PC-9 (cell line): ENCODE measurements at regions of chr14 and their contacts with region 1.

Region 1: DNA sequence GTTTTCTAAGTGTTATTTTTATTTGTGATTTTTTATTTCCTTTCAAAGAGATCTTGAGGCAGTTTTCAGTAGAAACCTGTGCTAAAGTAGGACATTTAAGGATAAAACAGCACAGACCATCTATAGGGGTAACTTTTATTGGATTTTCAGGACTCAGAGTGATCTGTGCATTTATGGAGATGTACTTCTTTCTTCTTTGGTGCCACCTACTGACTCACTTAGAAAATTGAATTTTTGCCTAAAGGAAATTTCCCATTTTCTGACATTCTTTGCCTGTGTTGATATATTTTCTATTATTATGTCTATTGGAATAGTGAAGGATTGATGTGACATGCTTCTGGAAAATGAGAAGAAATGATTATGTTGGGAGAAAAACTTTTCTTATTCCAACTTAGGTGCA is 113.0 kb downstream of the UNC79 start:
- DNase-seq: no peak
- H3K4me3 ChIP-seq: no peak overlapping the region
- H3K27ac ChIP-seq: no peak overlapping the region
- H3K4me1 ChIP-seq: no peaks in the 10 kb centered on the region
- H3K27me3 ChIP-seq: peaks cover 55% of the 10 kb centered on the region
- CTCF ChIP-seq: peak; percentile 60

Region 2: GRCh38 chr14:91911474-91912032 is 1632.2 kb before region 1 on chr14:
- CTCF ChIA-PET with region 1: no interaction called
- POLR2A ChIA-PET with region 1: no interaction called
- intact Hi-C with region 1: no loop called
- DNase-seq: no peak
- H3K4me3 ChIP-seq: no peak overlapping the region
- H3K27ac ChIP-seq: no peak overlapping the region
- H3K4me1 ChIP-seq: no peaks in the 10 kb centered on the region
- H3K27me3 ChIP-seq: no peaks in the 10 kb centered on the region
- CTCF ChIP-seq: peak; percentile 68

Region 3: GRCh38 chr14:93206793-93207467 is 336.8 kb before region 1 on chr14 and contains the starts of genes GON7 and UBR7:
- CTCF ChIA-PET with region 1: no interaction called
- POLR2A ChIA-PET with region 1: no interaction called
- intact Hi-C with region 1: loop called (anchors 5 kb)
- DNase-seq: peak; percentile 92 to 93
- H3K4me3 ChIP-seq: peak within 1 kb of the TSS; percentile 100
- H3K27ac ChIP-seq: peak within 1 kb of the TSS; percentile 63
- H3K4me1 ChIP-seq: peaks cover 23% of the 10 kb centered on the region
- H3K27me3 ChIP-seq: no peaks in the 10 kb centered on the region
- CTCF ChIP-seq: no peak
- total RNA-seq, gene GON7: 6.4 and 9.3 TPM in 2 replicates
- total RNA-seq, gene UBR7: 9.3 and 14.3 TPM in 2 replicates

Region 4: GRCh38 chr14:93231129-93231979 is 312.4 kb before region 1 on chr14:
- CTCF ChIA-PET with region 1: no interaction called
- POLR2A ChIA-PET with region 1: no interaction called
- intact Hi-C with region 1: loop called (anchors 5 kb)
- DNase-seq: no peak
- H3K4me3 ChIP-seq: no peak overlapping the region
- H3K27ac ChIP-seq: no peak overlapping the region
- H3K4me1 ChIP-seq: no peaks in the 10 kb centered on the region
- H3K27me3 ChIP-seq: no peaks in the 10 kb centered on the region
- CTCF ChIP-seq: no peak

Region 5: GRCh38 chr14:93285044-93285443 is 258.7 kb before region 1 on chr14:
- CTCF ChIA-PET with region 1: no interaction called
- POLR2A ChIA-PET with region 1: no interaction called
- intact Hi-C with region 1: loop called (anchors 5 kb)
- DNase-seq: no peak
- H3K4me3 ChIP-seq: no peak overlapping the region
- H3K27ac ChIP-seq: no peak overlapping the region
- H3K4me1 ChIP-seq: no peaks in the 10 kb centered on the region
- H3K27me3 ChIP-seq: no peaks in the 10 kb centered on the region
- CTCF ChIP-seq: no peak

Region 6: DNA sequence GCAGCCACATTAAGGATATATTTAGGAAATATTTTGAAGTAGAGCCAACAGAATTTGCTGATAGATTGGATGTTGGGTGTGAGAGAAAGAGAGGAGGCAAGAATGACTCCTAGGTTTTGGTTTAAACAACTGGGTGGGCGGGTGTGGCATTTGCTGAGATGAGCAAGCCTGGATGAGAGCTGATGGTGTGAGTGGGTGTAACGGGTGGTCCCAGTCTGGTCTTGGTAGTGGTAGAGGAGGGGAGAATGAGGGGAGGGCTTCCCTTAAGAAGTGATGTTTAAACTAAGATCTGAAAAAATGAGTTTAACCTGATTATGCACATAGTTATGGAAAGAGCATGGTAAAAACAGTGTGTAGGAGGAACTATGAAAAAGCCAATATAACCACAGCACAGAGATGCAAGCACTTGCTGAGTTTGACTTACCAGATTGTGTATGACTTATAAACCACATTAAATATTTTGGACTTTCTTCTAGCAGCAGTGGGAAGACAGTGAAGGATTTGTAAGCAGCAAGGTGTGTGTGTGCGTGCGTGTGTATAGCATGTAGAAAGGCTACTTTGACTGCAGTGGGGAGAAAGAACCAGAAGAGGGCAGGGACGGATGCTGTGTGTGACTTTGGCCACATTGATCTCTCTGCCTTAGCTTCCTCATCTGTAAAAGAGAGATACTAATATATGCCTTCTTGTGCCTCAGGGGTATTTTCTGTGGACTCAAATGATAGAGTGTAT is 104.8 kb after region 1 on chr14:
- CTCF ChIA-PET with region 1: no interaction called
- POLR2A ChIA-PET with region 1: no interaction called
- intact Hi-C with region 1: no loop called
- DNase-seq: no peak
- H3K4me3 ChIP-seq: no peak overlapping the region
- H3K27ac ChIP-seq: no peak overlapping the region
- H3K4me1 ChIP-seq: no peaks in the 10 kb centered on the region
- H3K27me3 ChIP-seq: peaks cover 8% of the 10 kb centered on the region; the same call in 1 of the 2 replicates
- CTCF ChIP-seq: peak; percentile 56